Psoas muscle (tissue), 8 donors: ENCODE measurements at regions of chr19 and their contacts with region 1.

Region 1: GRCh38 chr19:39833464-39834286 is at the start of gene DYRK1B:
- DNase-seq: peak; percentile 98 to 99
- ATAC-seq: peak; percentile 89 to 91 (median 90)
- H3K4me3 ChIP-seq: peak within 1 kb of the TSS; percentile 90
- H3K27ac ChIP-seq: peak within 1 kb of the TSS; percentile 88
- H3K4me1 ChIP-seq: peaks cover 26% of the 10 kb centered on the region
- H3K27me3 ChIP-seq: no peaks in the 10 kb centered on the region
- CTCF ChIP-seq: no peak
- total RNA-seq, gene DYRK1B: 64.5 to 157 (median 109) TPM

Region 2: GRCh38 chr19:39557441-39558151 is 276.1 kb before region 1 on chr19:
- intact Hi-C with region 1: no loop called
- DNase-seq: no peak
- ATAC-seq: no peak
- H3K4me3 ChIP-seq: no peak overlapping the region
- H3K27ac ChIP-seq: no peak overlapping the region
- H3K4me1 ChIP-seq: peaks cover 7% of the 10 kb centered on the region
- H3K27me3 ChIP-seq: no peaks in the 10 kb centered on the region
- CTCF ChIP-seq: no peak

Region 3: GRCh38 chr19:39752390-39752789 is 81.3 kb before region 1 on chr19:
- intact Hi-C with region 1: no loop called
- DNase-seq: no peak
- ATAC-seq: no peak
- H3K4me3 ChIP-seq: no peak overlapping the region
- H3K27ac ChIP-seq: no peak overlapping the region
- H3K4me1 ChIP-seq: no peaks in the 10 kb centered on the region
- H3K27me3 ChIP-seq: peaks cover 0 to 7% (median 0%) of the 10 kb centered on the region in 3 donors
- CTCF ChIP-seq: no peak

Region 4: GRCh38 chr19:39802958-39803357 is 30.7 kb before region 1 on chr19:
- intact Hi-C with region 1: loop called in 1 of 2 experiments (anchors 2 kb)
- DNase-seq: peak; percentile 43 to 82
- ATAC-seq: peak; percentile 94 to 97 (median 96)
- H3K4me3 ChIP-seq: no peak overlapping the region
- H3K27ac ChIP-seq: peak overlapping the region; percentile 78
- H3K4me1 ChIP-seq: peaks cover 14% of the 10 kb centered on the region
- H3K27me3 ChIP-seq: no peaks in the 10 kb centered on the region
- CTCF ChIP-seq: no peak

Region 5: GRCh38 chr19:39818626-39819097 is 15.0 kb before region 1 on chr19:
- intact Hi-C with region 1: loop called in 1 of 2 experiments (anchors 1 kb)
- DNase-seq: no peak
- ATAC-seq: peak in 3 of 4 donors; percentile 11 to 27 (median 17)
- H3K4me3 ChIP-seq: peak overlapping the region; percentile 29
- H3K27ac ChIP-seq: peak overlapping the region; percentile 91
- H3K4me1 ChIP-seq: peaks cover 50% of the 10 kb centered on the region
- H3K27me3 ChIP-seq: no peaks in the 10 kb centered on the region
- CTCF ChIP-seq: no peak